Astrocyte of the cerebellum (primary cell): ENCODE measurements at regions of chr5 and their contacts with region 1.

Region 1: DNA sequence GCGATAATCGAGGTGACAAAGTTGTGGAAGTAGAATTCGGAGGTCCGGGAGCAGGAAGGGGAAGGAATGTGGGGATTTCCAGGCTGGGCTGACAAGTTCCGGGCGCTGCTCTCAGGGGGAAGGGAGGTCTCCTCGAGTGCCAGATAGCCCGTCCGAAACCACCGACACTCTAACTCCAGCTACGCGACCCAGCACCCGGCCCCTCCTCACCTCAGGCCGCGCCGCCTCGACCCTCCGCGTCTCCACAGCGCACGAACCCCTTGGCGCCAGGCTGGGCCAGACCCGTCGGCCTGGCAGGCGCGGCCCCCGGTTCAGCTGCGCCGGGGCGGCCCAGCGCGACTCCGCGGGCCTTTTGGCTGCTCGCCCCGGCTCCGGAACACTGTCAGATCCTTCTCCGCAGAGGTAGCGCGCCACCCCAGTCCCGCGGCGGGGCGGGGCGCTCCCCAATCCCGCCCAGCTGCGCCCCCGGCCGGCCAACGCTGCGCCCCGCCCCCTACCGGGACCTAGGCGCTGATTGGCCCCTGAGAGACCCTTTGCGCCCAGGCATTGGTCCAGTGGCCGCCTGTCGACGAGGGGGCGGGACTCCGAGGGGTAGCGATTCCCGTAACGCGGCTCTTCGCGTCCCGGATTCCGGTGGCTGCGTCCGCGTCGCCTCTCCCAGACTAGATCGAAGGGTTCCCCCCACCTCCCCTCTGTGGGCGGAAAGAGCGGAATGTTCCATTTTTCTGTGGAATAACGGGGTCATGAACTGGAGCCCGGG is at the start of gene IL6ST:
- DNase-seq: peak; percentile 89
- H3K4me3 ChIP-seq: peak within 1 kb of the TSS; percentile 88
- CTCF ChIP-seq: no peak

Region 2: DNA sequence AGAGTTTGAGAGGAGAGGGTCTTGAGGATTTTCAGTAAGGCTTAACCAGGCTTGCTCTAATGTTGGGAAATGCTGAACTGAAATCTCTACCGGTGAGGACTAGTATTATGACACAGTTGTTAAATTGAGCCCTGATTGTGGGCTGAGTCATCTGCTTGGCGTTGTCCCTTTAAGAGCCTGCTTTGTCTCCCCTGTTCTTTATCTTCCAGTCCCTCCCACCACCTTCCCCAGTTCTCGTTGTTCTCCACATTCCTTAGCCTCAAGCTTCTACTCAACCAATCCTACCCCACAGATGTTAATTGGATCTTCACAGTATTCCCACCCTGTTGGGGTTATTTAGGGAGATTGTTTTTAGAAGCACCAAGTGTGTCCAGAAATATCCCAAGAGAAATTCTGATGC is 180.7 kb after region 1 on chr5:
- in situ Hi-C with region 1: loop called (anchors 25 kb)
- DNase-seq: peak; percentile 57
- H3K4me3 ChIP-seq: no peak overlapping the region
- CTCF ChIP-seq: no peak